Colonic mucosa (tissue), 4 donors: ENCODE measurements at regions of chr5 and their contacts with region 1.

Region 1: GRCh38 chr5:91380491-91381238 is 2.5 kb downstream of the ARRDC3 start:
- DNase-seq: peak; percentile 100
- H3K4me3 ChIP-seq: peak overlapping the region; percentile 81
- H3K27ac ChIP-seq: peak overlapping the region; percentile 100
- H3K4me1 ChIP-seq: peaks cover 11% of the 10 kb centered on the region
- H3K27me3 ChIP-seq: no peaks in the 10 kb centered on the region
- CTCF ChIP-seq: no peak

Region 2: DNA sequence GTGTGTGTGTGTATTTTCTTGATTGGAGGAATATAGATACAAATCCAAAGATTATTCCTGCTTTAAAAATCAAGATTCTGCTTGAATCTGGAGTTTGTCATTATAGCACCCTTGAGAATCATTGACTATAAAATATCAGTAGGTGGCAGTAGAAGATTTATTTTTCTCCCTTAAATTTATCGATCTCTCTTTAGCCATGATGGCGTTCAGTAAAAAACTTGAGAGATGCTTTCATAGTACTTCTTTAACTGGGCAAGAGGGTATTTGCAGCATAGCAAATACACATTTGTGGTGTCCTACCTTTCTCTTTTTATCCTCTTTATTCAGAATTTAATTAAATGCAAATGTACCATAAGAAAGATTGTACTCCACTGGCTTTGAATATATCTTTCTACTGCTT is 514.3 kb before region 1 on chr5:
- intact Hi-C with region 1: loop called (anchors 5 kb)
- DNase-seq: no peak
- H3K4me3 ChIP-seq: no peak overlapping the region
- H3K27ac ChIP-seq: no peak overlapping the region
- H3K4me1 ChIP-seq: no peaks in the 10 kb centered on the region
- H3K27me3 ChIP-seq: no peaks in the 10 kb centered on the region
- CTCF ChIP-seq: peak; percentile 38

Region 3: GRCh38 chr5:91101600-91102379 is 278.9 kb before region 1 on chr5:
- intact Hi-C with region 1: loop called (anchors 2 kb)
- DNase-seq: peak; percentile 80
- H3K4me3 ChIP-seq: no peak overlapping the region
- H3K27ac ChIP-seq: no peak overlapping the region
- H3K4me1 ChIP-seq: peaks cover 3% of the 10 kb centered on the region
- H3K27me3 ChIP-seq: no peaks in the 10 kb centered on the region
- CTCF ChIP-seq: peak; percentile 60

Region 4: DNA sequence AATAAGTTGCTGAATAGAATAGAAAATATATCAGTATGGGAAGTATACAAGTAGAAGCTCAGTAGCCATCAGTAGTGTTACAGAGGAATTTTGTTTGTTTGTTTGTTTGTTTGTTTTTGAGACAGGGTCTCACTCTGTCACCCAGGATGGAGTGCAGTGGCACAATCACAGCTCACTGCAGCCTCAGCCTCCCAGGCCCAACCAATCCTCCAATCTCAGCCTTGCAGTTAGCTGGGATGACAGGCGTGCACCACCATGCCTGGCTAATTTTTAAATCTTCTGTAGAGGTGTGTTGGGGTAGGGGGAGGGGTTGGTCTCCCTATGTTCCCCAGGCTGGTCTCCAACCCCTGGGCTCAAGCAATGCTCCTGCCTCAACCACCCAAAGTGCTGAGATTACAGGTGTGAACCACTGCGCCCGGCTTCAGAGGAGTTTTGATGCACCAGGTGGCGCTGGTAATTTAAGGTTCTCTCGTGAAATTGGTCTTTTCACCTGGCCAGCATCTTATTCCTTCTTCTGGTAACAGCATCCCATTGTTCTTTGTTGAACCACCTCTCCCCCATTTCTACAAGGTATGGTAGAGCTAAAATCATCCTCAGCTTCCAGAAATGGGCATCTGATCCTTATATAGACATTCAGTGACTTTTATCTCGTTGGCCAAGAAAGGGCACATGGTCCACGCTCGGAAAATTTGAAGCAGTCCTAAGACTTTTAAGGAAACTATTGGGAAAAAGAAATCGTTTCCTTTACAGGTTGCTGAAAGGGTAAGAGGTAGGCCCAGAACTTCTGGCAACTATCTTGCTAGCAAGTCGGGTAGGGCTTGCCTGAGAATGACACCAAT is 154.6 kb before region 1 on chr5:
- intact Hi-C with region 1: loop called (anchors 2 kb)
- DNase-seq: peak; percentile 58
- H3K4me3 ChIP-seq: no peak overlapping the region
- H3K27ac ChIP-seq: no peak overlapping the region
- H3K4me1 ChIP-seq: no peaks in the 10 kb centered on the region
- H3K27me3 ChIP-seq: no peaks in the 10 kb centered on the region
- CTCF ChIP-seq: peak; percentile 28

Region 5: DNA sequence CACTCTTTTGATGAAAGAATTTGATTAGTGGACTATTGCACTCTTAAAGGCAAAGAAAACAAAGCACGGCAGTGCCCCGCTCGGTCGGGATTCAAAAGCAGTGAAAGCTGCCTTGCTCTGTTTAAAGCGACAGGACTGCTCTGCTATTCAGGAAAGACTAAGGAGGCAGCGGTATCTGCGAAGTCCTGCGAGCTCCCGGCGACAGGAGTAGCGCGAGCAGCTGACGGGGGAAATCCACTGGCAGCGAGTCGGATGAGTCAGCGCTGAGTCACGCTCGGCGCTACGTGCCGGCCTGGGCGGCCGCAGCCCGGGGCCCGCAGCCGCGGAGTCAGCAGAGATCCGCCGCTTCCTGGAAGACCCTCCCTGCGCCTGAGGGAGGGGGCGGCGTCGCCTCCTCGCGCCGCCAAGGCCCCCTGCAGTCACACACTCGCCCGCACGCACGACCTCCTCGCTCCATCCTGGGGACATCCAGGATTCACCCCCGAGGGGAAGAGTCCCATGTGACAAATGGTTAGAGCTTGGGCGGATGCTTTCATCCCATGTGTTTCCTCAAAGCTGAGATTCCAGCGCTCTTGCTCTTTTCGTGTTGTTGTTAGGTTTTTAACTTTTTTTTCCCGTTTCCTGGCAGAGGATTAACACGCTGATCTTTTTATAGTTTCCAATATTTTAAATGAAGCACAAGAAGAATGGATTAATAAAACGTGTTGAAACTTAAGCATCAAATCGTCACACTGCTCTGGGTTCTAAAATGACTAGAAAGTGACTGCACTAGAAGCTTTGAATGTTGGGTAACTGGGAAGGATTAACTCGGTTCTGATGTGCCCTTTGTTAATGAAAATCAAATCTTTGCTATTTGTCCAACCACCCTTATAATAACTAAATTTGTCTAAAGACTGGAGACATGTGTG is 100.0 kb before region 1 on chr5:
- intact Hi-C with region 1: loop called (anchors 2 kb)
- DNase-seq: peak; percentile 94
- H3K4me3 ChIP-seq: peak overlapping the region; percentile 45
- H3K27ac ChIP-seq: peak overlapping the region; percentile 88
- H3K4me1 ChIP-seq: no peaks in the 10 kb centered on the region
- H3K27me3 ChIP-seq: no peaks in the 10 kb centered on the region
- CTCF ChIP-seq: no peak

Region 6: DNA sequence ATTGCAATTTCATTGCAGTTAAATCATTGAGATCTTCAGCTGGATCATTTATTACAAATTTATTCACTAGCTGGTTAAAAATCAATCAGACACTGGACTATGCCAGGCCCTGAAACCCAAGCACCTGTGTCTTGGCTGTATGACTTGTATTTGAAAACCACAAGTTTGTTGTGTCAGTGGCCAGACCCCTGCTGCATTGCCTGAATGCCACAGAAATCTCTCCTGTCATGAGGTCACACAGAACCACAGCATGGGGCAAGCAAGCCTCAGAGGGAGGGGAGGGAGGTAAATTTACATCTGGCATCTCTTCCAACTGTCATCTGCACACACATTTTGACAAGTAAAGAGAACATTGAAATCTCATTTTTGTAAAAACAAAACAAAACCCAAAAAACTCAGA is 87.5 kb before region 1 on chr5:
- intact Hi-C with region 1: no loop called
- DNase-seq: no peak
- H3K4me3 ChIP-seq: no peak overlapping the region
- H3K27ac ChIP-seq: no peak overlapping the region
- H3K4me1 ChIP-seq: no peaks in the 10 kb centered on the region
- H3K27me3 ChIP-seq: no peaks in the 10 kb centered on the region
- CTCF ChIP-seq: no peak